ENCODE measurements at regions of chr2 and their contacts with region 1.

Region 1: GRCh38 chr2:164599966-164600589 is 21.2 kb downstream of the GRB14 start:
- DNase-seq: no peak
- ATAC-seq: no peak
- H3K4me3 Mint-ChIP-seq: no peak overlapping the region
- H3K27ac Mint-ChIP-seq: no peak overlapping the region
- H3K4me1 Mint-ChIP-seq: no peaks in the 10 kb centered on the region
- H3K27me3 Mint-ChIP-seq: peaks cover 17% of the 10 kb centered on the region
- CTCF ChIP-seq: no peak

Region 2: DNA sequence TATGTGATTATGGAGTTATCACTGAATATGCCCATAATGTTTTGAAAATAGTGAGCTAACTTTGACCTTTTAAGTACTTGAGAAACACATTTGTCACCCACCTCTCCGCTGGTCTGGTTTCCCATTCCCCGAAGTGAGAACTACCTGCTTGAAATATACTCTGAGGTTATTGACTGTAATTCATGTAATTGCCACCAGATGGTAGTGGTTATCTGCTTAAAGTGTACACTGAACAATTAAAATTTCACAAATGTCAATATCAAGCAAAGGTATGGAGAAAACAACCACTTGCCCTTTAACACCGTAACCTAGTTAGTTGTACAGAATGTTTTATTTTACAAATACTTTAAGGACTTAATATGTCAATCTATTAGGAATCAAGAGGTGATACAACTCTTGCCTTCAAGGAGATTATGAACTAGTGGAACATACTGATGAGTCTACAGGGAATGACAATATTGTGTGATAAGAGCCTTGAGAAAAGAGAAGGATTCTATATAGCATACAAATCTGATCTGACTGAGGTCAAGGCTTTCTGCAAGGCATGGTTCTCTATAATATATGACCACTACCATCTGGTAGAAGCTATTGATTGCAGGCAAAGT is 1444.7 kb before region 1 on chr2:
- CTCF ChIA-PET with region 1: no interaction called
- POLR2A ChIA-PET with region 1: no interaction called
- intact Hi-C with region 1: loop called (anchors 10 kb)
- DNase-seq: no peak
- ATAC-seq: no peak
- H3K4me3 Mint-ChIP-seq: no peak overlapping the region
- H3K27ac Mint-ChIP-seq: no peak overlapping the region
- H3K4me1 Mint-ChIP-seq: no peaks in the 10 kb centered on the region
- H3K27me3 Mint-ChIP-seq: peaks cover 3% of the 10 kb centered on the region
- CTCF ChIP-seq: no peak

Region 3: GRCh38 chr2:164151518-164151917 is 448.6 kb before region 1 on chr2:
- CTCF ChIA-PET with region 1: no interaction called
- POLR2A ChIA-PET with region 1: no interaction called
- intact Hi-C with region 1: no loop called
- DNase-seq: no peak
- ATAC-seq: no peak
- H3K4me3 Mint-ChIP-seq: no peak overlapping the region
- H3K27ac Mint-ChIP-seq: no peak overlapping the region
- H3K4me1 Mint-ChIP-seq: no peaks in the 10 kb centered on the region
- H3K27me3 Mint-ChIP-seq: no peaks in the 10 kb centered on the region
- CTCF ChIP-seq: no peak

Region 4: DNA sequence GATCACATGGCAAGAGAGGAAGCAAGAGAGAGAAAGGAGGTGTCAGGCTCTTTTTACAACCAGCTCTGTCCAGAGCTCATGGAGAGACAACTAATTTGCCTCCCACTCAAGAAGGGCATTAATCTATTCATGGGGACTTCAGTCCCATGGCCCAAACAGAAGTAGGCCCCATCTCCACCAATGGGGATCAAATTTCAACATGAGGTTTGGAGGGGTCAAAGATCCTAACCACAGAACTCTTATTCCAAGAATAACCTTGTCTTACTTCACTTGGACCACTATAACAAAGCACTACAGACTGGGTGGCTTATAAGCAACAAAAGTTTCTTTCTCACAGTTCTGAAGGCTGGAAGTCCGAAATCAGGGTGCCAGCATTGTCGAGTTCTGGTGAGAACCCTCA is 10.6 kb before region 1 on chr2:
- CTCF ChIA-PET with region 1: no interaction called
- POLR2A ChIA-PET with region 1: no interaction called
- intact Hi-C with region 1: no loop called
- DNase-seq: no peak
- ATAC-seq: no peak
- H3K4me3 Mint-ChIP-seq: no peak overlapping the region
- H3K27ac Mint-ChIP-seq: no peak overlapping the region
- H3K4me1 Mint-ChIP-seq: no peaks in the 10 kb centered on the region
- H3K27me3 Mint-ChIP-seq: peaks cover 9% of the 10 kb centered on the region
- CTCF ChIP-seq: no peak

Measured in activated B cell treated with CpG ODN at 0.5 μM for 24 hours (primary cell).